T-cell (primary cell): ENCODE measurements at regions of chr17 and their contacts with region 1.

Region 1: DNA sequence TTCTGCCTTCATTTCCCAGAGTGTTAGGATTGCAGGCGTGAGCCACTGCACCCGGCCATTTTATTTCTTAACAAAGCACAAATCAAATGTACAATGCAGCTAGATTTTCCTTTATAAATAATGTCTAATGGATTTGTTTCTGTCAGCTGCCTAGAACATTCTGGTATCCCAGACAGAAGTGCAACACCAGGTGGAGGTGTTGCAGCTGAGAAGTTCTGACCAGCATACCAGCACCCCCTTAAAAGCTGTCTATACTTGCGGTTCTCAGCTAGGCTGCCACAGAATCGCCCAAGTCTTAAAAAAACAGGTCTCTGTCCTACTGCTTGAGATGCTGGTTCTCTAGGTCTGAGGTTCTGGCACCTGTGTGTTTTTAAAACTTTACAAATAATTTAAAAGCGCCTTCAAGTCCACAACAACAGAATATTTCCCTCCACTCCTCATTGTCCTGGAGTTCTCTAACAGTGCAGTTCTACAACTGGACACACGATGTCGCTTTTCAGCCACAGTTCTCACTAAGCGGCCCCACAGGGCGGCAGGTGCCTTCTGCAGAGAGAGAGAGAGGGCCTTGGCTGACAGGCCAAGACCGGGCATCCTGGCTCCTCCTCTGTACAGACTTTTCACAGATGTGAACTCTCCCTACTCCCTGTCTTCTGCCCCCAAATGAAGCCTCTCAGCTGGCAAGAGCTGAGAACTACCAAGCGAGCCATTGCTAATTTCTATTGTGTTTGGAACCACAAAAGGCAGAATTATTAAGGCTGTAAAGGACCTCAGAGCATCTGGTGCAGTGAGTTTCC is 32.6 kb upstream of the MEOX1 start:
- DNase-seq: peak; percentile 39 to 88 (median 62)
- ATAC-seq: peak; percentile 83 to 93 (median 91)
- H3K4me3 ChIP-seq: no peak overlapping the region
- H3K4me3 Mint-ChIP-seq: no peak overlapping the region
- H3K27ac ChIP-seq: no peak overlapping the region
- H3K27ac Mint-ChIP-seq: no peak overlapping the region
- H3K4me1 ChIP-seq: peaks cover 0 to 2% of the 10 kb centered on the region in 2 experiments
- H3K4me1 Mint-ChIP-seq: peaks cover 0 to 2% (median 0%) of the 10 kb centered on the region in 3 donors
- H3K27me3 ChIP-seq: peaks cover 0 to 48% of the 10 kb centered on the region in 2 experiments
- H3K27me3 Mint-ChIP-seq: peaks cover 9% of the 10 kb centered on the region in 2 donors

Region 2: GRCh38 chr17:43760254-43760852 is 66.1 kb after region 1 on chr17:
- CTCF ChIA-PET with region 1: interaction called, 6 to 30 read pairs
- POLR2A ChIA-PET with region 1: no interaction called
- DNase-seq: peak; percentile 65 to 92 (median 84)
- ATAC-seq: peak; percentile 84 to 97 (median 90)
- H3K4me3 ChIP-seq: no peak overlapping the region
- H3K4me3 Mint-ChIP-seq: no peak overlapping the region
- H3K27ac ChIP-seq: no peak overlapping the region
- H3K27ac Mint-ChIP-seq: no peak overlapping the region
- H3K4me1 ChIP-seq: peaks cover 0 to 5% of the 10 kb centered on the region in 2 experiments
- H3K4me1 Mint-ChIP-seq: peaks cover 0 to 6% (median 3%) of the 10 kb centered on the region in 3 donors
- H3K27me3 ChIP-seq: peaks cover 0 to 47% of the 10 kb centered on the region in 2 experiments
- H3K27me3 Mint-ChIP-seq: peaks cover 16 to 34% of the 10 kb centered on the region in 2 donors

Region 3: DNA sequence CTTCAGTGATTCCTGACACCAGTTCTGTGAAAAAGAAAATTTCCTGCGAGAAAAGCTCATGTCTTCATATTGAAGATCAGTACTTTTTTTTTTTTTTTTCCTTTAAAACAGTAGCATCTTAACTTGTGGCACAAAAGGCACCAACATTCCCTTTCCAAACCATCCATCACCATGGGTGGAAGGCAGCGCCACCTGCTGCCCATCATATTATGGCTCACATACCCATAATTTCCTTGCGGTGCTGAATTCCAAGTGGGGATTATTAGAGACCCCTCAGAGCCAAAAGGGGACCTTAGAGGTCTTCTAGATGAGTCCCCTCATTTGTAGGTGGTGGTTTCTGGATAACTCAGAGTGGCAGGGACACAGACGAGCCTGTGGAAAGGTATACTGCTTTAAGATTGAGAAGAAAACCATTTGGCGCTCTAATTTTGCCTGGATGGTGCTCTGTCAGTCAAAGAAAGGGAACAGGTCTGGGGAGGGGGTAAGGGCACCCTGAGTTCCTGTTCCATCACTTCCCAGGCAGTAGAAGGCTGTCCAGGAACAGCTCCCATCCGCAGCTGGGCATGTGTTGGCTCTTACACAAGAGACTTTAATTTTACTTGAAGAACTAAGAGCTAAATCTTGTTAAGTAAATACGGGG is 72.3 kb after region 1 on chr17:
- CTCF ChIA-PET with region 1: interaction called, 5 to 30 read pairs
- POLR2A ChIA-PET with region 1: no interaction called
- DNase-seq: peak in 22 of 35 experiments; percentile 14 to 73 (median 38)
- ATAC-seq: no peak
- H3K4me3 ChIP-seq: no peak overlapping the region
- H3K4me3 Mint-ChIP-seq: no peak overlapping the region
- H3K27ac ChIP-seq: no peak overlapping the region
- H3K27ac Mint-ChIP-seq: no peak overlapping the region
- H3K4me1 ChIP-seq: no peaks in the 10 kb centered on the region
- H3K4me1 Mint-ChIP-seq: no peaks in the 10 kb centered on the region
- H3K27me3 ChIP-seq: peaks cover 0 to 2% of the 10 kb centered on the region in 2 experiments
- H3K27me3 Mint-ChIP-seq: no peaks in the 10 kb centered on the region